Heart right ventricle (tissue), 16 donors: ENCODE measurements at regions of chr17 and their contacts with region 1.

Region 1: GRCh38 chr17:60720763-60721531 is 43.3 kb downstream of the BCAS3 start:
- DNase-seq: peak in 1 of 2 donors; percentile 24
- ATAC-seq: peak in 2 of 8 donors; percentile 42 to 59
- H3K4me3 ChIP-seq: no peak overlapping the region
- H3K27ac ChIP-seq: no peak overlapping the region
- H3K4me1 ChIP-seq: peaks cover 0 to 5% (median 0%) of the 10 kb centered on the region in 9 donors
- H3K27me3 ChIP-seq: no peaks in the 10 kb centered on the region
- CTCF ChIP-seq: peak; percentile 77 to 94 (median 89)

Region 2: GRCh38 chr17:60993497-60993896 is 272.6 kb after region 1 on chr17:
- intact Hi-C with region 1: loop called in 2 of 10 experiments (anchors 10 kb)
- DNase-seq: no peak
- ATAC-seq: no peak
- H3K4me3 ChIP-seq: no peak overlapping the region
- H3K27ac ChIP-seq: no peak overlapping the region
- H3K4me1 ChIP-seq: no peaks in the 10 kb centered on the region
- H3K27me3 ChIP-seq: no peaks in the 10 kb centered on the region
- CTCF ChIP-seq: no peak

Region 3: GRCh38 chr17:61389670-61390478 is 668.9 kb after region 1 on chr17:
- intact Hi-C with region 1: loop called in 4 of 10 experiments (anchors 5 to 10 kb)
- DNase-seq: peak in 1 of 2 donors; percentile 68
- ATAC-seq: peak; percentile 57 to 81 (median 73)
- H3K4me3 ChIP-seq: peak overlapping the region in 2 of 10 donors; percentile 1 to 20
- H3K27ac ChIP-seq: peak overlapping the region in 9 of 10 donors; percentile 19 to 72 (median 60)
- H3K4me1 ChIP-seq: peaks cover 0 to 24% (median 8%) of the 10 kb centered on the region in 9 donors
- H3K27me3 ChIP-seq: peaks cover 0 to 12% (median 0%) of the 10 kb centered on the region in 7 donors
- CTCF ChIP-seq: peak; percentile 66 to 92 (median 90)

Region 4: GRCh38 chr17:61399131-61400057 is 678.4 kb after region 1 on chr17 and contains the start of gene TBX2:
- intact Hi-C with region 1: loop called in 5 of 10 experiments (anchors 5 to 10 kb)
- DNase-seq: peak; percentile 84 to 89
- ATAC-seq: peak; percentile 59 to 75 (median 64)
- H3K4me3 ChIP-seq: peak within 1 kb of the TSS; percentile 46 to 81 (median 66)
- H3K27ac ChIP-seq: peak within 1 kb of the TSS; percentile 69 to 88 (median 85)
- H3K4me1 ChIP-seq: peaks cover 15 to 77% (median 54%) of the 10 kb centered on the region in 9 donors
- H3K27me3 ChIP-seq: peaks cover 44 to 96% (median 86%) of the 10 kb centered on the region in 7 donors
- CTCF ChIP-seq: peak in 3 of 9 donors; percentile 10 to 19 (median 13)
- total RNA-seq, gene TBX2: 4.6 to 21.8 (median 10.0) TPM

Region 5: DNA sequence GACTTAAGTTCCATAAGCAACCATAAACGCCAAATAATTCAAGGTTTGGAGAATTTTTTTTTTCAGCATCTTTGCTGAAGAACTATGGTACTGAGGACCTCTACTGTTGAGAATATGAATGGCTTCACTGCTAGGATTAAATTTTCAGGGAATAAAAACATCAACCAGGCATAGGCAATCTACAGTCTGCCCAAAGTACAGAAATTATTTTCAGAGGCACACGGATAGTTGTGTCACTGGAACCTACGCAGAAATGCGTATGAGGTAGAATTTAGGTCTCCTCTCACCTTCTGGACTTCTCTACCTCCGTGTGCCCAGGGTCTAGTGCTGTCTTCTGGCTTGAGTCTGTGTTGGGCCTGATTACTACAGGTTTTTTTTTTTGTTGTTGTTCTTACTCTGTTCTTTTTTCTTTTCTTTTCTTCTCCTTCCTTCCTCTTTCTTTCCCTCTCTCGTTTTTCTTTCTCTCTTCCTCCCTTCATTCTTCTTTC is 830.4 kb after region 1 on chr17:
- intact Hi-C with region 1: loop called in 3 of 10 experiments (anchors 5 to 10 kb)
- DNase-seq: no peak
- ATAC-seq: no peak
- H3K4me3 ChIP-seq: no peak overlapping the region
- H3K27ac ChIP-seq: no peak overlapping the region
- H3K4me1 ChIP-seq: no peaks in the 10 kb centered on the region
- H3K27me3 ChIP-seq: peaks cover 0 to 55% (median 41%) of the 10 kb centered on the region in 7 donors
- CTCF ChIP-seq: peak; percentile 21 to 73 (median 63)

Region 6: GRCh38 chr17:61837175-61838051 is 1116.5 kb after region 1 on chr17:
- intact Hi-C with region 1: loop called in 3 of 10 experiments (anchors 5 to 10 kb)
- DNase-seq: peak; percentile 19 to 24
- ATAC-seq: no peak
- H3K4me3 ChIP-seq: no peak overlapping the region
- H3K27ac ChIP-seq: no peak overlapping the region
- H3K4me1 ChIP-seq: no peaks in the 10 kb centered on the region
- H3K27me3 ChIP-seq: no peaks in the 10 kb centered on the region
- CTCF ChIP-seq: peak in 8 of 9 donors; percentile 24 to 81 (median 69)